Mammary epithelial cell (primary cell): ENCODE measurements at regions of chr4 and their contacts with region 1.

Region 1: GRCh38 chr4:70437212-70437611 is 34.8 kb upstream of the MUC7 start:
- DNase-seq: no peak
- H3K4me3 ChIP-seq: no peak overlapping the region
- H3K27ac ChIP-seq: no peak overlapping the region
- H3K4me1 ChIP-seq: no peaks in the 10 kb centered on the region
- H3K27me3 ChIP-seq: no peaks in the 10 kb centered on the region
- CTCF ChIP-seq: no peak

Region 2: GRCh38 chr4:70399319-70399718 is 37.9 kb before region 1 on chr4:
- CTCF ChIA-PET with region 1: no interaction called
- dilution Hi-C with region 1: loop called (anchors 5 kb)
- in situ Hi-C with region 1: no loop called
- intact Hi-C with region 1: no loop called
- DNase-seq: peak; percentile 13
- H3K4me3 ChIP-seq: no peak overlapping the region
- H3K27ac ChIP-seq: no peak overlapping the region
- H3K4me1 ChIP-seq: no peaks in the 10 kb centered on the region
- H3K27me3 ChIP-seq: no peaks in the 10 kb centered on the region
- CTCF ChIP-seq: no peak

Region 3: DNA sequence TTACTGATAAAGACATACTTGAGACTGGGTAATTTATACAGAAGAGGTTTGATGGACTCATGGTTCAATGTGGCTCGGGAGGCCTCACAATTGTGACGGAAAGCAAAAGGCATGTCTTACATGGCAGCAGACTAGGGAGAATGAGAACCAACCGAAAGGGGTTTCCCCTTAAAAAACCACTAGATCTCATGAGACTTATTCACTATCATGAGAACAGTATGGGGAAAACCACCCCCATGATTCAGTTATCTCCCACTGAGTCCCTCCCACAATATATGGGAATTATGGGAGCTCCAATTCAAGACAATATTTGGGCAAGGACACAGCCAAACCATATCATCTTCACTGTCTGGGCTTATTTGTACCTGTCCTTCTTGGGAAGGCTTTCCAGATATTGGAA is 12.0 kb after region 1 on chr4:
- CTCF ChIA-PET with region 1: no interaction called
- dilution Hi-C with region 1: no loop called
- in situ Hi-C with region 1: no loop called
- intact Hi-C with region 1: no loop called
- DNase-seq: no peak
- H3K4me3 ChIP-seq: no peak overlapping the region
- H3K27ac ChIP-seq: no peak overlapping the region
- H3K4me1 ChIP-seq: no peaks in the 10 kb centered on the region
- H3K27me3 ChIP-seq: no peaks in the 10 kb centered on the region
- CTCF ChIP-seq: no peak

Region 4: DNA sequence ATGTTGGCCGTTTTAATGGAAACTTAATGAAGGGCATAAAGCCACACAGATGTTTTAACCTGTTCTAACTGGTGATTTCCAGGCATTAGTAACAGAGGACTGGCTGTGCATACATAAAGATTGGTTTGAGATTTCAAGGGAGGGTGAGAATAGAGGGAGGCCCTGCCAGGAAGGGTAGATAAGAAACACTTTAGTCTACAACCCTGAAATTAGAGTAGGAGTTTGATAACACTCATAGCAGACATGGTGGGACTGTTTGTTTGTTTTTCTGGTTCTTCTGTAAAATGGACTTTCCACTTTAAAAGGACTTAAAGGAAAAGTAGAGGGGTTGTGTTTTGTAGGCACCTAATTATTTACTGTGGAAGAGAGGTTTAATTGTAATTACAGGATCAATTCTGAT is 917.8 kb after region 1 on chr4:
- CTCF ChIA-PET with region 1: no interaction called
- dilution Hi-C with region 1: no loop called
- in situ Hi-C with region 1: no loop called
- intact Hi-C with region 1: no loop called
- DNase-seq: no peak
- H3K4me3 ChIP-seq: no peak overlapping the region
- H3K27ac ChIP-seq: no peak overlapping the region
- H3K4me1 ChIP-seq: no peaks in the 10 kb centered on the region
- H3K27me3 ChIP-seq: no peaks in the 10 kb centered on the region
- CTCF ChIP-seq: no peak